GM12878 (cell line): ENCODE measurements at regions of chr2 and their contacts with region 1.

Region 1: GRCh38 chr2:213251618-213252017 is 32.6 kb upstream of the SPAG16 start:
- DNase-seq: no peak
- ATAC-seq: peak; percentile 87
- H3K4me3 ChIP-seq: no peak overlapping the region
- H3K27ac ChIP-seq: no peak overlapping the region
- H3K4me1 ChIP-seq: peaks cover 6% of the 10 kb centered on the region; the same call in 1 of the 2 replicates
- H3K27me3 ChIP-seq: no peaks in the 10 kb centered on the region
- CTCF ChIP-seq: peak; percentile 38 to 73 (median 47); a peak in 5 of 6 replicates
- EP300 ChIP-seq: no peak
- POLR2A ChIP-seq: no peak
- RAD21 ChIP-seq: peak; percentile 90

Region 2: GRCh38 chr2:213021971-213022899 is 229.4 kb before region 1 on chr2:
- CTCF ChIA-PET with region 1: no interaction called
- POLR2A ChIA-PET with region 1: no interaction called
- RAD21 ChIA-PET with region 1: no interaction called
- SMC1A ChIA-PET with region 1: interaction called, 237 read pairs
- in situ Hi-C with region 1: no loop called
- intact Hi-C with region 1: no loop called
- DNase-seq: peak; percentile 87
- ATAC-seq: peak; percentile 78
- H3K4me3 ChIP-seq: peak overlapping the region; percentile 76
- H3K27ac ChIP-seq: peak overlapping the region; percentile 96
- H3K4me1 ChIP-seq: peaks cover 14% of the 10 kb centered on the region; the same call in 1 of the 2 replicates
- H3K27me3 ChIP-seq: no peaks in the 10 kb centered on the region
- CTCF ChIP-seq: no peak
- EP300 ChIP-seq: peak; percentile 80 to 87
- POLR2A ChIP-seq: peak; percentile 88
- RAD21 ChIP-seq: peak; percentile 27; the same call in 1 of the 2 replicates

Region 3: DNA sequence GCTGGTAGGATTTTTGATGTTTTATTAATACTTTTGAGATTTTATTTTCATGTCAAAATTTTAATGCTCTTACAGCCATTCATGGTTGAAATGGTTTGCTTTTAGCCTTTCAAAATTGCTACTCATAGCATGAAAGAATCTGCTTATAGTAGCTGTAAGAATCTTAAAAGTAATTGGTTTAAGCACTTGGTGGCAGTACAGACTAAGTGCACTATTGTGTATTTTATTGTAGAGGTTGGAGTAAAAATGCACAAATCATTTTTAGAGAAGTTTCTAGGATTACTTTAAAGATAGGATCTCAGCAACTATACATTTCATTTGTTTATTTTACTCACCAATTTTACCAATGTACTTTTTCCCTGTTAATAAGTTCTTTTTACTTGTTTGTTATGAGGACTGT is 238.5 kb after region 1 on chr2:
- CTCF ChIA-PET with region 1: interaction called, 3 read pairs
- POLR2A ChIA-PET with region 1: no interaction called
- RAD21 ChIA-PET with region 1: interaction called, 3 read pairs
- SMC1A ChIA-PET with region 1: interaction called, 4 read pairs
- in situ Hi-C with region 1: no loop called
- intact Hi-C with region 1: loop called (anchors 5 kb)
- DNase-seq: no peak
- ATAC-seq: peak; percentile 50; the same call in 1 of the 3 replicates
- H3K4me3 ChIP-seq: no peak overlapping the region
- H3K27ac ChIP-seq: no peak overlapping the region
- H3K4me1 ChIP-seq: no peaks in the 10 kb centered on the region
- H3K27me3 ChIP-seq: no peaks in the 10 kb centered on the region
- CTCF ChIP-seq: peak in 2 of 3 experiments; percentile 15 to 43; a peak in 2 of 6 replicates
- EP300 ChIP-seq: no peak
- POLR2A ChIP-seq: no peak
- RAD21 ChIP-seq: peak; percentile 61

Region 4: DNA sequence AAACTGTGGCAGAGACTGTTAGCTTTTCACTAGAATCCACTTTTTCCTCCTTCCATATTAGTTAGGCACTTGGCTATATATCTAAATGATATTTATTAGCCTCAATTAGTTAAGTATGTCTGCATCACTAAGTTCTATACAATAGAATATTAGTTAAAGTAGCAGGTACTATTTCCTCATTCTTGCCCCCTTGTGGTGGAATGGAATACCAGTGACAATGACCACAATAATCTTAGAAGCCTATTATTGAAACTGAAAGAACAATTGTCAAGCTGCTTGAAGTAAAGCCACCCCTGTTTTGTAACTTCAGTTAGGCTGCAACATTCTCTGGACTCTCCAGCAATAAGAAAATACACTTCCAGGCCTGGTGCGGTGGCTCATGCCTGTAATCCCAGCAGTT is 682.9 kb after region 1 on chr2:
- CTCF ChIA-PET with region 1: interaction called, 5 read pairs
- POLR2A ChIA-PET with region 1: no interaction called
- RAD21 ChIA-PET with region 1: no interaction called
- SMC1A ChIA-PET with region 1: interaction called, 4 read pairs
- in situ Hi-C with region 1: loop called (anchors 5 kb)
- intact Hi-C with region 1: loop called (anchors 1 kb)
- DNase-seq: peak; percentile 11
- ATAC-seq: peak; percentile 98
- H3K4me3 ChIP-seq: no peak overlapping the region
- H3K27ac ChIP-seq: no peak overlapping the region
- H3K4me1 ChIP-seq: no peaks in the 10 kb centered on the region
- H3K27me3 ChIP-seq: no peaks in the 10 kb centered on the region
- CTCF ChIP-seq: peak; percentile 48 to 56 (median 49); a peak in 5 of 6 replicates
- EP300 ChIP-seq: no peak
- POLR2A ChIP-seq: no peak
- RAD21 ChIP-seq: peak; percentile 60

Region 5: GRCh38 chr2:214310319-214310718 is 1058.7 kb after region 1 on chr2:
- CTCF ChIA-PET with region 1: no interaction called
- POLR2A ChIA-PET with region 1: no interaction called
- RAD21 ChIA-PET with region 1: no interaction called
- SMC1A ChIA-PET with region 1: no interaction called
- in situ Hi-C with region 1: no loop called
- intact Hi-C with region 1: loop called (anchors 5 kb)
- DNase-seq: no peak
- ATAC-seq: peak; percentile 75
- H3K4me3 ChIP-seq: no peak overlapping the region
- H3K27ac ChIP-seq: no peak overlapping the region
- H3K4me1 ChIP-seq: no peaks in the 10 kb centered on the region; the same call in 1 of the 2 replicates
- H3K27me3 ChIP-seq: no peaks in the 10 kb centered on the region
- CTCF ChIP-seq: peak; percentile 33 to 45 (median 35); a peak in 5 of 6 replicates
- EP300 ChIP-seq: no peak
- POLR2A ChIP-seq: no peak
- RAD21 ChIP-seq: peak; percentile 52

Region 6: GRCh38 chr2:214995926-214996670 is 1744.5 kb after region 1 on chr2:
- CTCF ChIA-PET with region 1: no interaction called
- POLR2A ChIA-PET with region 1: no interaction called
- RAD21 ChIA-PET with region 1: interaction called, 4 read pairs
- SMC1A ChIA-PET with region 1: no interaction called
- in situ Hi-C with region 1: loop called (anchors 10 kb)
- intact Hi-C with region 1: loop called (anchors 5 kb)
- DNase-seq: peak; percentile 85
- ATAC-seq: peak; percentile 96
- H3K4me3 ChIP-seq: 0 out of 2 replicates have a peak overlapping the region, but pooled peaks have one; percentile 21
- H3K27ac ChIP-seq: peak overlapping the region; percentile 89
- H3K4me1 ChIP-seq: peaks cover 20% of the 10 kb centered on the region
- H3K27me3 ChIP-seq: no peaks in the 10 kb centered on the region
- CTCF ChIP-seq: no peak
- EP300 ChIP-seq: peak; percentile 70 to 82; a peak in 2 of 4 replicates
- POLR2A ChIP-seq: no peak
- RAD21 ChIP-seq: no peak